ENCODE measurements at regions of chr2 and their contacts with region 1.

Region 1: DNA sequence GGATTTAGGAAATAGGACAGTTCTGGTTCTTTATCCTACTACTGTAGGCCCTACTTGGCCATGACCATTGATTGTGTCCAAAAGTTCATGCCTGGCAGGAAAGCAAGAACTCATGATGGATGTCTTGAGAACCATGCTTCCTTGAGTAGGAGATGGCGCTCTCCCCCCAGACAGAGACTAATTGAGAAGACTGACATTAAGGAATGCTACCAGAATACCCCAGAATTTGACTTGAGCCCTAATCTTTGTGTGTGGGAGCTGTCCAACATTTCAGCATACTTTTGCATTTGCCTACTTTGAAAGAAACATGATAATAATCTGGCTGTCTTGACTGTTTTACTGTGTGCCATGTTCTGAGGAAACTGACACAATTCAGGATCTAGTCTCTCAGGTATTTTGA is 23.3 kb downstream of the MAPRE3 start:
- DNase-seq: no peak
- CTCF ChIP-seq: no peak

Region 2: DNA sequence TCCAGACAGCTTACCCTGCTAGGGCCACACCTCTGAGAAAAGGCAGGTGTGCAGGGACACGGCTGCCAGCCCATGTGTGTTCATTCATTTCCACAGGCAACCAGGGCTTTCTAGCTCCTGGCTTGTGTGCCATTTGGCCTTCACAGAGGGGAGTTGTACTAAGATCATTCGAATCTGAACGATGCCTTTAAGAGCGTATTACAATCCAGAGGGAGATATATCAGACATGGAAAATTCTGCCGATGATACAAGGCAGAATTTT is 451.6 kb before region 1 on chr2:
- CTCF ChIA-PET with region 1: no interaction called
- POLR2A ChIA-PET with region 1: no interaction called
- DNase-seq: no peak
- CTCF ChIP-seq: no peak

Region 3: GRCh38 chr2:26982102-26982742 is 11.5 kb before region 1 on chr2:
- CTCF ChIA-PET with region 1: interaction called, 16 read pairs
- POLR2A ChIA-PET with region 1: no interaction called
- DNase-seq: peak; percentile 41
- CTCF ChIP-seq: no peak

Region 4: DNA sequence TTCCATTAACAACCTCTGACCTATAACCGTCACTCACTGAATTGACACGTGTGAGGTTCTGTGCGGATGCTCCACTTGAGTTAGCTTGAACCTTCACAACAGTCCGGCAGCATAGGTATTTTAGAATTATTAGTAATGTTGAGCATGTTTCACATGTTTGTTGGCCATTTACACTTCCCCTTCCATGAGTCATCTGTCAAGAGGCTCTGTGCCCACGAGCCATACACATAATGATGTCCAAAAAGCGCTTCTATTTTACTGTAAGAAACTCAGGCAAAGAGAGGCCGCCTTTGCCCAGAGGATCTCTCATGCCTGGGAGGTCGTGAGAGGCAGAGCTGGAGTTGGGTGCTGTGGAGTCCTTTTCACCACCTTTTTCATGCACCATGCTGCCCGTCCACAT is 10.1 kb after region 1 on chr2:
- CTCF ChIA-PET with region 1: interaction called, 22 read pairs
- POLR2A ChIA-PET with region 1: no interaction called
- DNase-seq: no peak
- CTCF ChIP-seq: no peak